Activated T-helper 1 cell treated with anti-CD3 and anti-CD28 coated beads, Interleukin-12 subunit alpha, Interleukin-12 subunit beta, Interleukin-2, Interleukin-4 antibody, amounts not matched to agents 30 ng/mL and 10 ng/mL and 1 ng/mL, durations not matched to agents 14 hours and 24 hours and 36 hours (primary cell): ENCODE measurements at regions of chr19 and their contacts with region 1.

Region 1: DNA sequence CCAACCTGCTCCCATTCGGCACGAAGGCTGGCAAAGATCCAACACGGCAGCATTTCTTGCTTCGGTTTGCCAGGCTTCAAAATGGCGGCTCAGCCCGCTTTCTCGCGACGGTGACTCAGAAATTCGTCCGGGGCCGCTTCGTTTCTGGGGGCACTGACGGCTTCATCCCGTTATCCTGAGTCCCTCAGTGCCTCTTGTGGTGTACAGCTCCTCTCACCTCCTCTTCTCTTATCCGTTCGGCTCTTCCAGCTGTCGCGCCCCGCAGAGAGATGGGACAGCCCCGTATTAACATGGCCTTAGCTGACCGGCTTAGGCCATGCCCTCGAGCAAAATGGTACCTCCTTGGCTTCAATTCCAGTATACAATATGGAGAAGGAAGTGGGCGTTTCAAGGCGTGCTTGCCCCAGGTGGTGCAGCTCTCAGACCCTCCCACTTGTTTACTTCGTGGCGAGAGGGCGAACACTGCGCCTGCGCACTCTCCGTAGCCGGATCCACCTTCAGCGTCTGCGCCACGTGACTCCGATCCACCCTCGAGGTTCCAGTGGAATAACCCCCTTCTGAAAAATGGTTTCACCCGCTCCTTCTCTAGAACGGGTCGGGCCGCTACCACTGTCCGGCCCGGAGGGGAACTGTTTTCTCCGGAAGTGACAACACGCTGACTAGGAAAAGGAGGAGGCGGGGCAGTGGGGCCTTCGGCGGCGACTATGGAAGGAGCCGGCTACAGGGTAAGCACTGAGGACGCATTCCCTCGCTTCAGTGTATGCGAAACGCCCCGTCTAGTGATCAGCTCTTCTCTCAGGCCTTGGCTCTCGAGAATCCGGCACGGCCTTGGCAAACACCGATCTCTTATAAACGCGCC is at the starts of genes AKT1S1 and TBC1D17:
- DNase-seq: peak; percentile 99
- H3K4me3 Mint-ChIP-seq: no peak within 1 kb of the TSS
- H3K27ac Mint-ChIP-seq: no peak within 1 kb of the TSS
- H3K4me1 Mint-ChIP-seq: peaks cover 30% of the 10 kb centered on the region
- H3K27me3 Mint-ChIP-seq: no peaks in the 10 kb centered on the region
- total RNA-seq, gene AKT1S1: 32.1 and 32.2 TPM in 2 replicates
- total RNA-seq, gene TBC1D17: 38.7 and 41.8 TPM in 2 replicates

Region 2: GRCh38 chr19:49430678-49431329 is 446.4 kb before region 1 on chr19:
- intact Hi-C with region 1: no loop called
- DNase-seq: no peak
- H3K4me3 Mint-ChIP-seq: no peak overlapping the region
- H3K27ac Mint-ChIP-seq: no peak overlapping the region
- H3K4me1 Mint-ChIP-seq: peaks cover 31% of the 10 kb centered on the region
- H3K27me3 Mint-ChIP-seq: peaks cover 85% of the 10 kb centered on the region

Region 3: DNA sequence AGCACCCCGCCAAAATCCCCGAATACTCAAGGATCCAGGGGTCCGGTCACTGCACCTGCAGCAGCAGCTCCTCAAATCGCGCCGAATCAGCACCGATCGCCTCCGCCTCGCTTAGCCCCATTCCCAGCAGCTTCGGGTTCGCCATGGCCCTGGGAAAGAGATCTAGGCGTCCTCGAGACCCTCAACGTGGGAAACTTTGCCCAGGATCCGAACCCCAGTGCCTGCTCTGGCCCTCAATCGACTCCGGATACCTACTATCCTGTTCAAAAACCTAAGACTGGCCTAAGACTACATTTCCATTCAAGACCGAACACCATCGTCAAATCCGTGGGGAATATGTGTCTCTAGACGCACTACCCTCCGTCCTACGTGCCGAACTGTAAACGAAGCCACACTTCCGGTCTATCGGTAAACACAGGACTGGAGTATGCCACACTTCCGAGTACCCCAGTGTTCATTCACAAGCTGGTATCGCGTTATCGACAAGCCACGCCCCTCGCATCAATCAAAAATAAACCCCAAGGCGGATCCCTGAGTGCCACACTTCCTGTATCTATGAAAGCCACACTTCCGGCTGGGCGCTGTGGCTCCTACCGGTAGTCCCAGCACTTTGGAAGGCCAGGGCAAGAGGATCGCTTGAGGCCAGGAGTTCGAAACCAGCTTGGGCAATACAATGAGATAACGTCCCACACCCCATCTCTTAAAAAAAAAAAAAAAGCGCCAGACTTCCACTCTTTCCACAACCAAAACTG is 425.6 kb before region 1 on chr19 and contains the start of gene PIH1D1:
- intact Hi-C with region 1: loop called (anchors 2 kb)
- DNase-seq: peak; percentile 94
- H3K4me3 Mint-ChIP-seq: peak within 1 kb of the TSS; percentile 96
- H3K27ac Mint-ChIP-seq: peak within 1 kb of the TSS; percentile 99
- H3K4me1 Mint-ChIP-seq: peaks cover 55% of the 10 kb centered on the region
- H3K27me3 Mint-ChIP-seq: no peaks in the 10 kb centered on the region
- total RNA-seq, gene PIH1D1: 124 and 126 TPM in 2 replicates

Region 4: DNA sequence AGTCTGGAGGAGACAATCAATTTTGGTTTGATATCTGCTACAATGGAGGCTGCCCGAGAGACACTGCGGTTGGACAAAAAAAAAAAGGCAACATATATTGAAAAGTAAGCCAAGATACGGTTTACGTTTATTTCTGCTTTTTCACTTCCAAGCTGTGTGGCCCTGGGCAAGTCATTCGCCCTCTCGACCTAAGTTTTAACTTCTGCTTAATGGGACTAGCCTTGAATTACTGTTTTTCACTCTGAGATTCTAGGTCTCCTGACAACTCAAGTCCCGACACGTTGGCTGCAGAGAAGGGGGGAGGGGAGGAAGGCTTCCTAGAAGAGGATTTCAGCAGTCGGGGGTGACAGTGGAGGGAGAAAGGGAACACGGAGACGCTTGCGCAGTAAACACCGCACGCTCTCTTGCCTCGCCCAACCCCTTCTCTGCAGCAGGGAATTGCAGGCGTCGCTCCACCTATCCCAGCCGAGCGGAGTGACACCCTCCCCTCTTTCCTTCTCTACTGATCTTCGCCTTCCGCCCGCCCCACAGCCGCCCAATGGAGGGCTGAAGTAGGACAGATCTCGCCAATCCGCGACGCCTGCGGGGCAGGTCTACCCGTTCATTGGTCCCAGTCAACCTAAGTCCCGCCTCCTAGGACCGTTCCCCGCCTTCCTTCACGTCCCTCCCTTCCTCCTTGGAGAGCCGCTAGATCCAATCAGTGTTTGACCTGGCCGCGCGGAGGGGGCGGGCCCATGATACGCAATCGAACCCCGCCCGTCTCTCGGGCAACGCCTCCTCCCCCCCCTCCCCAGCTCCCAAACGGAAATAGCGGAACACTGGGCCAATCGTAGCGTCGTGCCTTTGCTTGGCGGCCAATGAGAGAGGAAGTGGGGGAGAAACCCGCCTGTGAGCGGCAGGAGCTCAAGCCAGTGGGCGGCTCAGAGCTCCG is 111.0 kb before region 1 on chr19:
- intact Hi-C with region 1: loop called (anchors 1 kb)
- DNase-seq: peak; percentile 99
- H3K4me3 Mint-ChIP-seq: peak overlapping the region; percentile 89
- H3K27ac Mint-ChIP-seq: peak overlapping the region; percentile 91
- H3K4me1 Mint-ChIP-seq: peaks cover 24% of the 10 kb centered on the region
- H3K27me3 Mint-ChIP-seq: no peaks in the 10 kb centered on the region

Region 5: GRCh38 chr19:49889687-49890348 is 12.6 kb after region 1 on chr19:
- intact Hi-C with region 1: loop called (anchors 1 kb)
- DNase-seq: peak; percentile 74
- H3K4me3 Mint-ChIP-seq: peak overlapping the region; percentile 80
- H3K27ac Mint-ChIP-seq: peak overlapping the region; percentile 77
- H3K4me1 Mint-ChIP-seq: peaks cover 13% of the 10 kb centered on the region
- H3K27me3 Mint-ChIP-seq: peaks cover 1% of the 10 kb centered on the region

Region 6: DNA sequence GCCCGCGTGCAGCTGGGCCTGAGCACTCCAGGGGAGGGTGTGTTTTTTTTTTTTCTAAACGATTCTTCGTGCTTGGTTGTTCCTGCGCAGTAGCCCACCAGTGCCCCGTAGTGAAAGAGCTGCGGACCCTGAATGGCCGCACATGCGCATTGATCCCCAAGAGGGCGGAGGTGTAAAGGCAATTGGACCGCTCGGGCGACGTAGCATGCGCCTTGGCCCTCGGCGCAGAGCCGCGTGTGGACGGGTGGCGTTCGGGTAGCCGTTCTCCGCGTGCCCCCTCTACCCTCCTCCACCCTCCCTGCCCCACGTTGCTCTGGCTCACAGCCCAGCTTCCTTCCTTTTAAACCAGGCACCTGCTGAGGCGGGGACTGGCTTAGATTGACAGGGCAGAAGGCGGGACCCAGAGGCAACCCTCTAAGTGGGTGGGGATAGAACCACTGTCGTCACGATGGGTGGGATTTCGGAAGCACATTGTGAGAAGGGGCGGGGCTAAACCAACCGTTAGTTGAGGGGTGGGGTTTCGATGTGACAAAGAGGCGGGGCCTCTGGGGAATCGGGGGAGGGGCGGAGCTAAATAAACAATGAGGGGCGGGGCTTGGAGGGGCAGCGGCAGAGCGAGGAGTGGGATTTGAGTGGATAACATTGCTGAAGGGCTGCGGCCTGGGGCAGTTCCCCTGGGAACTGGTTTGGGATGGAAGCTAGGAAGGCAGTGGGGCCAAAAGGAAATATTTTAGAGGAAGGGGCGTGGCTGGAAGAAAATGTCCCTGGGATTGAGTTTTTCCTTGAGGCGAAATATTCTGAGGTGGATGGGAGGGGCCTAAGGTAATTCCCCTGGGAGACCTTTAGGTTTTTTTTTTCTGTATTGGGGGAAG is 52.6 kb after region 1 on chr19:
- intact Hi-C with region 1: loop called (anchors 1 kb)
- DNase-seq: peak; percentile 89
- H3K4me3 Mint-ChIP-seq: peak overlapping the region; percentile 97
- H3K27ac Mint-ChIP-seq: peak overlapping the region; percentile 100
- H3K4me1 Mint-ChIP-seq: peaks cover 49% of the 10 kb centered on the region
- H3K27me3 Mint-ChIP-seq: peaks cover 2% of the 10 kb centered on the region

Region 7: DNA sequence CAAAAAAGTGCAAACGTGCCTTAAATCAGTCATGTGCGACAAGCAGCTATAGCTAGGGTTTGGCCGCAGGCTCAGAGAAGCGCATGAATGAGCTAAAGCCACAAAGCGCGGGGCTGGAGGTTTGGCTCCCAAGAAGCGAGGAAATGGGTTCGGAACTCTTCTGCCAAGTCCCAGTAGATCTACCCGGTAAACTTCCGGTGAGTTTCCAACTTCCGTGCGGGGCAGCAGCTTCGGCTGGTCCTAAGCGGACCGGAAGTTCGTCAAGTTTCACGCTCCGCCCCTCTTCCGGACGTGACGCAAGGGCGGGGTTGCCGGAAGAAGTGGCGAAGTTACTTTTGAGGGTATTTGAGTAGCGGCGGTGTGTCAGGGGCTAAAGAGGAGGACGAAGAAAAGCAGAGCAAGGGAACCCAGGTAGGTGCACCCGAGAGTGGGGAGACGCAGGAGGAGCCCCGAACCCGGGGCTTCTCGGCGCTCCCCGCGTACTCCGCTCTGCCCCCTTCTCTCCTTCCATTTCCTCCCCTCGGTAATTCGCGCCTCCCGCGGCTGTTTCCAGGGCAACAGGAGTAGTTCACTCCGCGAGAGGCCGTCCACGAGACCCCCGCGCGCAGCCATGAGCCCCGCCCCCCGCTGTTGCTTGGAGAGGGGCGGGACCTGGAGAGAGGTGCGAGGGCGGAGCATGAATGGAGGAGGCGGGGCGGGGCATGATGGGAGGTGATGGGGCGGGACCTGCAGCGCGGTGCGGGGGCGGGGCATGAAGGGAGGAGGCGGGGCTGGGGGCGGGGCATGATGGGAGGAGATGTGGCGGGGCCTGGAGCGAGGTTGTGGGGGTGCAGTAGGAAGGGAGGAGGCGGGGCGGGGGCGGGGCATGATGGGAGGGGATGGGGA is 499.2 kb after region 1 on chr19 and contains the start of gene NR1H2:
- intact Hi-C with region 1: loop called (anchors 1 kb)
- DNase-seq: peak; percentile 93
- H3K4me3 Mint-ChIP-seq: peak within 1 kb of the TSS; percentile 100
- H3K27ac Mint-ChIP-seq: peak within 1 kb of the TSS; percentile 99
- H3K4me1 Mint-ChIP-seq: peaks cover 27% of the 10 kb centered on the region
- H3K27me3 Mint-ChIP-seq: no peaks in the 10 kb centered on the region
- total RNA-seq, gene NR1H2: 84.3 and 84.8 TPM in 2 replicates